Naive thymus-derived CD4-positive, alpha-beta T cell (primary cell): ENCODE measurements at regions of chr2 and their contacts with region 1.

Region 1: GRCh38 chr2:178807227-178808008 is at the start of gene TTN:
- DNase-seq: no peak
- ATAC-seq: no peak
- H3K4me3 ChIP-seq: no peak within 1 kb of the TSS
- H3K4me3 Mint-ChIP-seq: no peak within 1 kb of the TSS
- H3K27ac ChIP-seq: no peak within 1 kb of the TSS
- H3K27ac Mint-ChIP-seq: peak within 1 kb of the TSS in 2 of 9 donors; percentile 2 to 19
- H3K4me1 ChIP-seq: no peaks in the 10 kb centered on the region
- H3K4me1 Mint-ChIP-seq: peaks cover 0 to 3% (median 0%) of the 10 kb centered on the region in 7 donors
- H3K27me3 ChIP-seq: no peaks in the 10 kb centered on the region
- H3K27me3 Mint-ChIP-seq: no peaks in the 10 kb centered on the region
- total RNA-seq, gene TTN: 12.9 to 45.5 (median 39.9) TPM

Region 2: DNA sequence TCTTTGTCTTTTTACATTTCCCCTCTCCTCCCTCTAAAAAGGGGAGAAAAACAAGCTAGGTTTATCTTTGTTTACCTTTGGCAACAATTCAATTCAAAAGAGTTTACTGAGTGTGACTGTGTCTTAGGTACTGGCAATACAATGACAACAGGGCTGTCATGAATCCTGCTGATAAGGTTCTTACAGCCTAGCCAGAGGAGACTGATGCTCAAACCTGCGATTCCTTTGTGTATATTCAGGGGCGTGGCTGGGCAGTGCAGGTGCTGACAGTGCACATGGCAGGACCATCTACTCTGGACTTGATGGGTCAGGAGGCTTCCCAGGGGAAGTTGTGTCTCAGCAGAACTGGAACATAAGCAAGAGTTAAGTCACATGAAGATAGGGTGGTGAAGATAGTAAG is 23.0 kb after region 1 on chr2:
- CTCF ChIA-PET with region 1: no interaction called
- POLR2A ChIA-PET with region 1: no interaction called
- intact Hi-C with region 1: loop called in 1 of 2 experiments (anchors 1 kb)
- DNase-seq: no peak
- ATAC-seq: no peak
- H3K4me3 ChIP-seq: no peak overlapping the region
- H3K4me3 Mint-ChIP-seq: peak overlapping the region in 3 of 10 donors; percentile 20 to 57 (median 49)
- H3K27ac ChIP-seq: no peak overlapping the region
- H3K27ac Mint-ChIP-seq: peak overlapping the region in 8 of 9 donors; percentile 37 to 81 (median 59)
- H3K4me1 ChIP-seq: no peaks in the 10 kb centered on the region
- H3K4me1 Mint-ChIP-seq: peaks cover 7 to 29% (median 22%) of the 10 kb centered on the region in 7 donors
- H3K27me3 ChIP-seq: no peaks in the 10 kb centered on the region
- H3K27me3 Mint-ChIP-seq: no peaks in the 10 kb centered on the region